ENCODE measurements at regions of chr1 and their contacts with region 1.

Region 1: DNA sequence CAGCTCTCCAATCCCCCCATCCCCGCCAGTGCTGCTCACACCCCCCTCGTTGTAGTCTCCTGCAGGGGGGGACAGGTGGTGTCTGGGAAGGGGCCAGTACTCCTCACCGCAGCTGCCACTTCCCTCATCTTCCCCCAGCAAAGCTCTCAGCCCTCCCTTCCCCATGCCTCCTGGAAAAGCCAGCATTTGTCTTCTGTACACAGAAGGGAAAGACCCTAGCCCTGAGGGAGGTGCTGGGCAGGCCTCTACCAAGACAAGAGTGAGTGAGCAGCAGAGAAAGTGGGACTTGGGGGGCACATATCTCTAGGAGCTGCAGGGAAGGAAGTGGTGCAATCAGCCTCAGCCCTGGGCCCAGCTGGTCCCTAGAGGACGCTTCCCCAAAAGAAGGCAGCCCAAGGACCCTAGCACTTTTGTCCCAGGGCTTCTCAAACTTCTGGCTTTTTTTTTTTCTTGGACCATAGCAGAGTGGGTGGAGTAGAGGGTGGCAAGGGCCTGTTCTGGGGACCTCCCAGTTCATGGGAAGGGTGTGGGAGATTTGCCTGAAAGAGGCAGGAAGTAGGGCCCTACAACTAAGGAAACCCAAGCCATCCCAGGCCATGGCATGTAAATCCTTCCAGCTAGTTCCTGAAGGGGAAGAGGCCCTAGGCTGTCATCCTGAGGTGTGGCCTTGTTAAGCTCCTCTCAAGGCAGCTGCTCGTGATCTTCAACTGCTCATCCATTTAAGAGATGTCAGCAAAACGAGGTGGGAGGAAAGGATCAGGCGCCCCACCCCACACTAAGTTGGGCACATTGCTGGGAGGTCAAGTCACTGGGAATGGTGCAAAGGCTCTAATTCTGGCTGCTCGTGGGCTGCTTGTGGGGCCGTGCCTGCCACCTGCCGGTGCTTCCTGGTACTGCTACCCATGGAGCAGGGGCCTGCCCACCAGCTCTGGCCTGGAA is 12.6 kb downstream of the ZC3H12A start:
- DNase-seq: peak; percentile 81
- ATAC-seq: peak; percentile 78
- H3K4me3 Mint-ChIP-seq: no peak overlapping the region
- H3K27ac Mint-ChIP-seq: peak overlapping the region; percentile 74
- H3K4me1 Mint-ChIP-seq: peaks cover 27% of the 10 kb centered on the region
- H3K27me3 Mint-ChIP-seq: no peaks in the 10 kb centered on the region
- CTCF ChIP-seq: peak; percentile 90

Region 2: GRCh38 chr1:36941316-36941978 is 545.5 kb before region 1 on chr1:
- CTCF ChIA-PET with region 1: no interaction called
- POLR2A ChIA-PET with region 1: no interaction called
- intact Hi-C with region 1: no loop called
- DNase-seq: no peak
- ATAC-seq: no peak
- H3K4me3 Mint-ChIP-seq: no peak overlapping the region
- H3K27ac Mint-ChIP-seq: no peak overlapping the region
- H3K4me1 Mint-ChIP-seq: no peaks in the 10 kb centered on the region
- H3K27me3 Mint-ChIP-seq: peaks cover 8% of the 10 kb centered on the region
- CTCF ChIP-seq: no peak

Region 3: GRCh38 chr1:37420456-37420855 is 66.5 kb before region 1 on chr1:
- CTCF ChIA-PET with region 1: no interaction called
- POLR2A ChIA-PET with region 1: no interaction called
- intact Hi-C with region 1: no loop called
- DNase-seq: no peak
- ATAC-seq: no peak
- H3K4me3 Mint-ChIP-seq: no peak overlapping the region
- H3K27ac Mint-ChIP-seq: no peak overlapping the region
- H3K4me1 Mint-ChIP-seq: no peaks in the 10 kb centered on the region
- H3K27me3 Mint-ChIP-seq: peaks cover 20% of the 10 kb centered on the region
- CTCF ChIP-seq: no peak

Region 4: GRCh38 chr1:37434292-37434907 is 52.5 kb before region 1 on chr1:
- CTCF ChIA-PET with region 1: interaction called, 10 read pairs
- POLR2A ChIA-PET with region 1: no interaction called
- intact Hi-C with region 1: no loop called
- DNase-seq: peak; percentile 69
- ATAC-seq: peak; percentile 85
- H3K4me3 Mint-ChIP-seq: no peak overlapping the region
- H3K27ac Mint-ChIP-seq: no peak overlapping the region
- H3K4me1 Mint-ChIP-seq: no peaks in the 10 kb centered on the region
- H3K27me3 Mint-ChIP-seq: peaks cover 16% of the 10 kb centered on the region
- CTCF ChIP-seq: no peak

Region 5: GRCh38 chr1:37458528-37458927 is 28.4 kb before region 1 on chr1:
- CTCF ChIA-PET with region 1: interaction called, 261 read pairs
- POLR2A ChIA-PET with region 1: interaction called, 29 read pairs
- intact Hi-C with region 1: loop called (anchors 1 kb)
- DNase-seq: no peak
- ATAC-seq: no peak
- H3K4me3 Mint-ChIP-seq: no peak overlapping the region
- H3K27ac Mint-ChIP-seq: no peak overlapping the region
- H3K4me1 Mint-ChIP-seq: peaks cover 5% of the 10 kb centered on the region
- H3K27me3 Mint-ChIP-seq: no peaks in the 10 kb centered on the region
- CTCF ChIP-seq: no peak

Region 6: DNA sequence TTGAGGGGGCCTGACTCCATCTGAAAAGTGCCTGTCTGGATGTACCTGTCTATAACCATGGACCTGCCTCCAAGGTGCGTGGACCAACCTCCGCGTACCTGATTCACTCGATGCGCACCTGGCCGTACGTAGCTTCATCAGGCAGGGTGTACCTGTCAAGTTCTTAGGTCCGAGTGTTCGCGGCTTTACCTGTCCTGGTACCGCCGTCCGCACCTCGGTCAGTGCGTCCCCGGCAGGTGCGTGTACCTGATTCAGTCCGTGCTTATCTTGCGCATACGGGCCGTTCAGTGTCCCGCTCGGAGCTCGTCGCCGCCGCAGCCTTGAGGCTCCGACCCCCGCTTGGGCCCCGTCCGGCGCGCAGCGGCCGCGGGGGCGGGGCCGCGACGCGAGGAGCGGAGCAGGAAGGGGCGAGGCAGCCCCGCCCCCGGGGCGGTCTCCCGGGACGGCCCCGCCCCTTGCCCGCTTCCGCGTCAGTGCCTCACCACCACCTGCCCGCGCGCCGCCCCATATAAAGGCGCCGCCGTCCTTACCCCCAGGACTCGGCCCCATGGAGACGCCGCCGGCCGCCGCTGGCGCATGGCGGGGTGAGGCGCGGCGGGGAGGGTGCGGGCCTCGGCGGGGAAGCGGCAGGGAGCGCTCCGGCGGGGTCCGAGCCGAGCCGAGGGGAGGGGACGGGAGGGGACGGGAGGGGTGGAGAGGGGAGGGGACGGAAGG is 12.7 kb before region 1 on chr1 and contains the start of gene ZC3H12A:
- CTCF ChIA-PET with region 1: interaction called, 124 read pairs
- POLR2A ChIA-PET with region 1: interaction called, 132 read pairs
- intact Hi-C with region 1: loop called (anchors 1 kb)
- DNase-seq: peak; percentile 98
- ATAC-seq: peak; percentile 65
- H3K4me3 Mint-ChIP-seq: peak within 1 kb of the TSS; percentile 99
- H3K27ac Mint-ChIP-seq: peak within 1 kb of the TSS; percentile 92
- H3K4me1 Mint-ChIP-seq: peaks cover 36% of the 10 kb centered on the region
- H3K27me3 Mint-ChIP-seq: peaks cover 6% of the 10 kb centered on the region
- CTCF ChIP-seq: no peak
- total RNA-seq, gene ZC3H12A: 140 and 145 TPM in 2 replicates

Region 7: DNA sequence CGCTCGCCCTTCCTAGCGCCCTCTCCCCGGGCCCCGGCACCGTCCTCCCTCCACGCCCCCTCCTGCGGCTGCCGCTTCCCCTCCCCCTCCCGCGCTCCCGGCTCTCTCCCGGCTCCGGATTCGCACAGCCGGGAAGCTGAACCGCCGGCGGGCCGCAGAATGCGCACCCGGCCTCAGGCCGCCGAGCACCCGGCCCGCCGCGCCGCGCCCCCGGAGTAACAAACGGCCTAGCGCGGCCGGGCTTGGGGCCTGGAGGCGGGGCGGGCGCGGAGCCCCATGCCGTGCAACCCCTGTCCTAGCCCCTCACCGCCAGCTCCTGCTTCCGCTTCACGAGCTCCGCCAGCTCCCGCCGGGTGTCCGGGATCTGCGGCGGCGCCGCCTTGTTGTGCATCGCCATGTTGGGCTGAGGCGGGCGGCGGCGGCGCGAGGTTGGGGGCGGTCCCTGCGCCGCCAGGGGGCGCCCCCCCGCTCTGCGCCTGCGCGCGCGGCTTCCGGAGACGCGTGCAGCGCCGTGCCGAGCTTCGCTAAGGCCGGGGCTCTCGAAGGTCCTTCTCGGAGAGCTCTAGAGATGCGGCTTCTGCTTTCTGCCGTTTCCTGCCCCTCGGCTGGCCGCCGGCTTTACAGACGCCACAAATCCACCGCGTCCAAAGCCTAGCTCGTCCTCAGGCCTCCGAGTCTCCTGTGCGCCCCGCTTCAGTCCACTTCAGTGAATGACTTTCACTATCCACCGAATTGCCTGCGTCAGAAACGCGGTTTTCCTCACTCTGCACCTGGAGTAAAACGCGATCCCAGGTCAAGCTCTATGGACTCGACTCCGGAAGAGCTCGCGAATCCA is 27.6 kb after region 1 on chr1 and contains the start of gene MEAF6:
- CTCF ChIA-PET with region 1: interaction called, 11 read pairs
- POLR2A ChIA-PET with region 1: interaction called, 9 read pairs
- intact Hi-C with region 1: no loop called
- DNase-seq: peak; percentile 93
- ATAC-seq: peak; percentile 95
- H3K4me3 Mint-ChIP-seq: peak within 1 kb of the TSS; percentile 96
- H3K27ac Mint-ChIP-seq: peak within 1 kb of the TSS; percentile 98
- H3K4me1 Mint-ChIP-seq: peaks cover 39% of the 10 kb centered on the region
- H3K27me3 Mint-ChIP-seq: no peaks in the 10 kb centered on the region
- CTCF ChIP-seq: no peak
- total RNA-seq, gene MEAF6: 59.9 and 66.5 TPM in 2 replicates

Region 8: DNA sequence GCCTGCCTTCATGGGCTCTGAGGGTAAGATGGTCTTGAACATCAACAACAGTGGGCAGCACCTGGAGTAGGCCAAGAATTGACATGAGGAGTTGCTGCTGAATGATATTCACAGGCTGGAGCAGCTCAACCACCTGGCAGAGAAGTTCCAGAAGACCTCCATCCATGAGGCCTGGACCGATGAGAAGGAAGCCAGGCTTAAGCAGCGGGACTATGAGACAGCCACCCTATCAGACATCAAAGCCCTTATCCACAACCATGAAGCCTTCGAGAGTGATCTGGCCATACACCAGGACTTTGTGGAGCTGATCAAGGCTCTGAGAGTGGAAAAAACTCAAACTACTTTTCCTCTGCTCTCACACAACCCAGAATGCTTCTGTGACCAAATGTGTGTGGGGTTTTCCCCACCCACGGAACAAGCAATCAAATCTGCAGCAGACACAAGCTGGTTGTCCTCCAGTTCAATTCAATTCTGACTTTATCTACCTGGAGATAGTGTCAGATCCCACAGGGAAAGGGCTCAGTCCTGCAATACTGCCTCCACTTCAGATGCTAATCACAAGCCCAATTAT is 290.1 kb after region 1 on chr1:
- CTCF ChIA-PET with region 1: no interaction called
- POLR2A ChIA-PET with region 1: no interaction called
- intact Hi-C with region 1: no loop called
- DNase-seq: no peak
- ATAC-seq: peak; percentile 37
- H3K4me3 Mint-ChIP-seq: no peak overlapping the region
- H3K27ac Mint-ChIP-seq: no peak overlapping the region
- H3K4me1 Mint-ChIP-seq: peaks cover 9% of the 10 kb centered on the region
- H3K27me3 Mint-ChIP-seq: peaks cover 6% of the 10 kb centered on the region
- CTCF ChIP-seq: no peak